ENCODE measurements at regions of chr9 and their contacts with region 1.

Region 1: DNA sequence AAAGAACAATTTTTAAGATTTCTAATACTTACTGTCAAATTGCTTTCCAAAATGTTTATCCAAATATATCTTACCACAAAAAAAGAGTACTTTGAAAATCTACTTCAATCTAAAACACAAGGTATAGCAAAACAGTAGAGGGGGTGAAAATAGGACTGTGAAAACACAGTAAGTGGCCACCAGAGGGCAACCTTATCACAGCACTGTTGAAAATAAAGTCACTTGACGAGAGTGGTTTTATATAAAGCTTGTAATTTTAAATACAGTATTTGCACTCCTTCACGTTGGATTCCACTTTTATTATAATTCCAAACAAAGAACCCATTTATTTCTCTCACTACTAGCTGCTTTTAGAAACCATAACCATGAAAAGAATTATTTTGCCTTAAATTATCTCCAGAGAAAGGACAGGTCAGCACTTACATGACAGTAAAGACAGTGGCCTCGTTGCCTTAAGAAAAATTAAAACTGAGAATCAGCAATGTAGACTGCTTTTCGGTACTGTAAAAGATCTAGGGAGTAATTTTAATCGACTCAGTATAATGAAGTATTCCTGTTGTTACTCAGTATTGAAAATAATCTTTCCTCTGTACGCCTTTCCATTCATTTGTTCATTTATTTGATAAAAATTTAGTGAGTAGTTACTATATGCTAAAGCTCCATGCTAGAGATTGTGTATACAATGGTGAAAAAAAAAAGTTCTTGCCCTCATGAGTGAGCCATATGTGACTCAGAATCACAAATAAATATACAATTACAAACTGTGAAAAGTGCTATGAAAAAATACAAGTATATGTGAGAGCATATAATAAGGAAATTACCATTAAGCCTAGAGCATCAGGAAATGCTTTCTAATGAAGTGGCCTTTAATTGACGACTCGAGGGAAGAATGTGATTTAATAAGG is 40.0 kb upstream of the CDK5RAP2 start:
- DNase-seq: peak; percentile 56
- ATAC-seq: peak; percentile 77
- H3K4me3 ChIP-seq: no peak overlapping the region
- H3K27ac ChIP-seq: no peak overlapping the region
- H3K4me1 ChIP-seq: peaks cover 12% of the 10 kb centered on the region
- H3K27me3 ChIP-seq: no peaks in the 10 kb centered on the region
- CTCF ChIP-seq: peak; percentile 77
- EP300 ChIP-seq: no peak
- POLR2A ChIP-seq: no peak
- RAD21 ChIP-seq: peak; percentile 73

Region 2: GRCh38 chr9:120531683-120532300 is 88.2 kb before region 1 on chr9:
- CTCF ChIA-PET with region 1: no interaction called
- POLR2A ChIA-PET with region 1: no interaction called
- in situ Hi-C with region 1: no loop called
- intact Hi-C with region 1: loop called (anchors 10 kb)
- DNase-seq: peak; percentile 25
- ATAC-seq: peak; percentile 85
- H3K4me3 ChIP-seq: no peak overlapping the region
- H3K27ac ChIP-seq: no peak overlapping the region
- H3K4me1 ChIP-seq: no peaks in the 10 kb centered on the region; the same call in 1 of the 2 replicates
- H3K27me3 ChIP-seq: no peaks in the 10 kb centered on the region
- CTCF ChIP-seq: peak; percentile 54
- EP300 ChIP-seq: no peak
- POLR2A ChIP-seq: no peak
- RAD21 ChIP-seq: 0 out of 2 replicates have a peak, but pooled peaks have one; percentile 10

Region 3: DNA sequence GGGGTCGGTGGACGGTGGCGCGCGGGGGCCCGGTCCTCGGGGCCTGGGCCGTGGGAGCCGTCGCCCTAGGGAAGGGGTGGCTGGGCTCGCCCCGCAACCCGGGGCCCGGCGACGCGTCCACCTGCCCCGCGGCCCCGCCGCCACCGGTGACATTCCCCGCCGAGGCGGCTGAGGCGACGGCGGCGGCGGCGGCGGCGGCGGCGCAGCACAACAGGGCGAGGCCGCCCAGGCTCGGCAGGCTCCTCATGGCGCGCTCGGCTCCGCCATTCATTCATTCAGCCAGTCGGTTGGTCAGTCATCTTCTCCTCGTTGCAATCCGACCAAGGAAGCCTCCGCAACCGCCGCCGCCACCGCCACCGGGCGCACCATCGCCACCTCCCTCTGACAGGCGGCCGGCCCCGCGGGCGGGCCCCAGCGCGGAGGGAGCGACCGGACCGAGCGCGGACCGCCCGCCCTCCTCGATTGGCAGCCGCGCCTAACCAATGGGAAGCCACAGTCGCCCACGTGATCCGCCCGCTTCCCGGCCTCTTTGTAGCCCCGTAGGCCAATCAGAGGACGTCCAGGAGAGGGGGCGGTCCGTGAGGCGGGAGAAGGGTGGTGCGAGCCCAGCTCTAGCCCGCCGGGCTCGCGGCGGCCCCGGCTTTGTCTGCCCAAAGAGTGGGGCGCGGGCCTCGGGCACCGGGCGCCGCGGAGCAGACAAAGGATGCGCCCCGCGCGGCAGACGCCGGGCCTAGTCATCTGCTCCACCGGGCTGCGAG is 94.3 kb after region 1 on chr9 and contains the start of gene MEGF9:
- CTCF ChIA-PET with region 1: no interaction called
- POLR2A ChIA-PET with region 1: no interaction called
- in situ Hi-C with region 1: no loop called
- intact Hi-C with region 1: loop called (anchors 2 kb)
- DNase-seq: peak; percentile 92
- ATAC-seq: peak; percentile 95
- H3K4me3 ChIP-seq: peak within 1 kb of the TSS; percentile 79 to 89 (median 85)
- H3K27ac ChIP-seq: no peak within 1 kb of the TSS
- H3K4me1 ChIP-seq: peaks cover 68% of the 10 kb centered on the region
- H3K27me3 ChIP-seq: no peaks in the 10 kb centered on the region
- CTCF ChIP-seq: no peak
- EP300 ChIP-seq: no peak
- POLR2A ChIP-seq: peak; percentile 54 to 69
- RAD21 ChIP-seq: peak; percentile 15
- total RNA-seq, gene MEGF9: 3.1 and 3.3 TPM in 2 replicates

Region 4: GRCh38 chr9:120730661-120731514 is 110.9 kb after region 1 on chr9:
- CTCF ChIA-PET with region 1: no interaction called
- POLR2A ChIA-PET with region 1: interaction called, 7 read pairs
- in situ Hi-C with region 1: loop called (anchors 5 kb)
- intact Hi-C with region 1: loop called (anchors 5 kb)
- DNase-seq: peak; percentile 91
- ATAC-seq: peak; percentile 82
- H3K4me3 ChIP-seq: peak overlapping the region in 1 of 3 experiments; percentile 27; a peak in 1 of 6 replicates
- H3K27ac ChIP-seq: peak overlapping the region; percentile 9
- H3K4me1 ChIP-seq: peaks cover 66% of the 10 kb centered on the region
- H3K27me3 ChIP-seq: no peaks in the 10 kb centered on the region
- CTCF ChIP-seq: no peak
- EP300 ChIP-seq: peak; percentile 68 to 86; a peak in 3 of 4 replicates
- POLR2A ChIP-seq: no peak; a peak in 1 of 4 replicates
- RAD21 ChIP-seq: no peak

Region 5: GRCh38 chr9:120742951-120743416 is 123.0 kb after region 1 on chr9:
- CTCF ChIA-PET with region 1: interaction called, 10 read pairs
- POLR2A ChIA-PET with region 1: no interaction called
- in situ Hi-C with region 1: no loop called
- intact Hi-C with region 1: no loop called
- DNase-seq: peak; percentile 70
- ATAC-seq: peak; percentile 96
- H3K4me3 ChIP-seq: no peak overlapping the region
- H3K27ac ChIP-seq: no peak overlapping the region
- H3K4me1 ChIP-seq: peaks cover 7% of the 10 kb centered on the region
- H3K27me3 ChIP-seq: no peaks in the 10 kb centered on the region
- CTCF ChIP-seq: peak; percentile 86
- EP300 ChIP-seq: no peak
- POLR2A ChIP-seq: no peak
- RAD21 ChIP-seq: peak; percentile 82

Region 6: DNA sequence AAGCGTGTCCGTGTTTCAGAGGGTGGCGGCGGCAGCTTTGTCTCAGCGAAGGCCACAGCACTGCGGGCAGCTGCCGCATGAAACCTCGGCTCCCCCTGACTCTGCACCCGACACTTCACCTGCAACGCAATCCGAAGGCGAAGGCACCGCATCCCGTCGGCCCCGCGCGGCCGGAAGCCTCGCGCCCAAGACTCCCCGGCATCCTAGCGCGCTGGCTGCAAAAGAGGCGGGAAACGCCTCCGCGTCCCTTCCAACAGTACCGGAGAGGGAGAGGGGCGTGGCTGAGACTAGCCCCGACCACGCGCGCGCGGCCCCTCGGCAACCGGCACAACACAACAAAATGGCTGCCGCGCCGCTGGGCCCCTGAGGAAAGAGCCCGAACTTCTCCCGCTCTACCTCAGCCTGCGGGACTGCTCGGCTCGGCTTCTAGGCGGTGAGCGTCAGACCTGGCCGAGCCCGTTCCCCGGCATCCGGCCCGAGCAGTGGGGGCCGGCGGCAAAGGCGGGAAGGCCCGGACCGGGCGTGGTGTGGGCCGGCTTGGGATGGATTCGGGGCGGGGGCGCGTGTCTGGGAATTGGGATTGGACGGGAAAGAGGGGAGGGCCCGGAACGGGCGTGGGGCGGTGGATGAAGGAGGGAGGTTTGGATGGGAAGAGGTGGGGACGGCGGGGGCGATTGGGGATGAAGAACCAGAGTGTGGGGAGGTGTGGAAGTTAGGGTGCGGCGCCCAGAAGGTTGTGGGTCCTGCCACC is 454.8 kb after region 1 on chr9 and contains the start of gene CNTRL:
- CTCF ChIA-PET with region 1: no interaction called
- POLR2A ChIA-PET with region 1: no interaction called
- in situ Hi-C with region 1: no loop called
- intact Hi-C with region 1: no loop called
- DNase-seq: peak; percentile 71
- ATAC-seq: peak; percentile 91
- H3K4me3 ChIP-seq: peak within 1 kb of the TSS; percentile 68 to 81 (median 81)
- H3K27ac ChIP-seq: peak within 1 kb of the TSS; percentile 73
- H3K4me1 ChIP-seq: peaks cover 24% of the 10 kb centered on the region
- H3K27me3 ChIP-seq: no peaks in the 10 kb centered on the region
- CTCF ChIP-seq: no peak
- EP300 ChIP-seq: no peak
- POLR2A ChIP-seq: peak in 1 of 2 experiments; percentile 62; a peak in 3 of 4 replicates
- RAD21 ChIP-seq: no peak; the same call in 1 of the 2 replicates
- total RNA-seq, gene CNTRL: 11.8 and 14.4 TPM in 2 replicates

Measured in HepG2 (cell line).